ENCODE measurements at regions of chr12 and their contacts with region 1.

Region 1: GRCh38 chr12:118035246-118036041 is 18.9 kb downstream of the RFC5 start:
- DNase-seq: peak; percentile 16
- H3K4me3 ChIP-seq: no peak overlapping the region
- H3K27ac ChIP-seq: no peak overlapping the region
- H3K4me1 ChIP-seq: no peaks in the 10 kb centered on the region
- H3K27me3 ChIP-seq: no peaks in the 10 kb centered on the region
- CTCF ChIP-seq: no peak
- EP300 ChIP-seq: no peak
- POLR2A ChIP-seq: no peak

Region 2: DNA sequence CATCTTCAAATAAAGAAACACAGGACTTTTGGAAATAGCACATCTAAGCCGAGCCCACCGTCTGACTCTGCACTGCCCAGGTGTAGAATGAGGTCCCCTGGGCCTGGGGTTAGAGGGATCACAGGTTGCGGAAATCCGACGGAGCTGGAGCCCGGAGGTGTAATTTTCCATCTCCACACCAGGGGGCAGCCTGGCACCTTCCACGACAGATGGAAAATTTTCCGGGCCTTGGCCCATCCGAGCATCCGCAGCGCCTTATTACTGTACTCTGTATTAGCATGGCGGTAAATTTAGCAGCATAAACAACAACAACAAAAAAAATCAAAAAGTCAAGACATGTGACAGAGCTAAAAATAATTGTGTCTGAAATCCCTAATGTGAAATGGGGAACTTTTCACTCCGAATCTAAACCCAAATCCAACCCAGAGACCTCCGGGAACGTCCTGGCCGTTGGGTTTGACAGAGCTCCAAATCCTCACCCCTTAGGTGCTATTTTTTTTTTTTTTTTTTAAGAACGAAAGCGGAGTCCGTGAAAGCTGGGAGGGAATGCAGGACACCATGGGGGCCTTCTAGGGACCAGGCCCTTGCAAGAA is 160.5 kb before region 1 on chr12:
- in situ Hi-C with region 1: loop called in 1 of 4 experiments (anchors 10 kb)
- intact Hi-C with region 1: no loop called
- DNase-seq: peak; percentile 76
- H3K4me3 ChIP-seq: no peak overlapping the region
- H3K27ac ChIP-seq: no peak overlapping the region
- H3K4me1 ChIP-seq: no peaks in the 10 kb centered on the region
- H3K27me3 ChIP-seq: peaks cover 16% of the 10 kb centered on the region
- CTCF ChIP-seq: peak; percentile 86 to 93 (median 92)
- EP300 ChIP-seq: no peak
- POLR2A ChIP-seq: no peak

Region 3: DNA sequence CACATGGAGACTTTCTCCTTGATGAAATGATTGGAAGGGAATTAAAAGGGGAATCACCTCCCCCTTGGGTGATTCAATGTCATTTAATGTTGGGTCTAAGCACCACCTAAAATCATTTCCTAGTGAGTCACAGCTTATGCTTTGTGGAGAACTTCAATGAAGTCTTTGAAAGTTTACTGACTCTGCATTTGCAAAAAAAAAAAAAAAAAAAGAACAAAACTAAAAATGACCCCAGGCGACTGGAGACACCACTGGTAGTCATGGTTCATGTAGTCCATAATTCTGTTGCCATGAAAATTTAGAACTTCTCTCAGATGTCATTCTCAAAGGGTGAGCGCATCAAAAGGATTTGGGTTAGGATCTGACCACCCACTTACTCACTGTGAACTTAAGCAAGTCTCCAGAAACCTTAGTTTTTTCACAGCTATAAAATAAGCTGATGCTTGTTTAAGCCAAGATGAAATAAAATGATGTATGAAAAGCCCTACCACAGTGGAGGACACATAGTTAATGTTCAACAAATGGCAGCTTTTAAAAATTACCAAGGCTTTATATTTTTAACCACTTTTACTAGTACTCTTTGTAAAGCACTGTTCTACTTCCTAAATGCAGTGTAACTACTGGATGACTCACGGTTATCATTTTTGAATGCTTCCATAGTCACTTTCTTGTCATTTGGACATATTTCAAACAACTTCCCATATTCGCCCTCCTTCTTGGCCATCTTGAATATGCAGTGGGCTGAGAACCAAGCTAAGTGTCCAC is 48.6 kb before region 1 on chr12:
- in situ Hi-C with region 1: no loop called
- intact Hi-C with region 1: no loop called
- DNase-seq: no peak
- H3K4me3 ChIP-seq: no peak overlapping the region
- H3K27ac ChIP-seq: no peak overlapping the region
- H3K4me1 ChIP-seq: no peaks in the 10 kb centered on the region
- H3K27me3 ChIP-seq: peaks cover 9% of the 10 kb centered on the region
- CTCF ChIP-seq: no peak
- EP300 ChIP-seq: no peak
- POLR2A ChIP-seq: no peak